RWPE1 (cell line): ENCODE measurements at regions of chr15 and their contacts with region 1.

Region 1: DNA sequence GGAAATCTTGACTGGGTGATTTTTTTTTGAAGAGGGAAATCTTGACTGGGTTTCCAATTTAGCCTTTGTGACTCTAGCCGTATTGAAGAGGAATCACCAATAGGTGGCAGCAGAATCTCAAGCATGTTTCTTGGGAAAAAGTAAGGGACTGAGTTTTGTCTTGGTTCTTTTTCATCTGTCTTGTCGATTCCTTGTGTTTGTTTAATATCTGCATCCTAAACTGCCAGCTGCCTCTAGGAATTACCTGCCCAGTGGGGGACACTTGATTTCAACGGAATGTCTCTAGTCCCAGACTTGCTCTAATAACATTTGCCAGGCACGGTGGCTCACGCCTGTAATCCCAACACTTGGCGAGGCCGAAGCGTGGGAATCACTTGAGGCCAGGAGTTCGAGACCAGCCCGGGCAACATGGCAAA is 89.2 kb downstream of the RBPMS2 start:
- DNase-seq: peak; percentile 46
- H3K27ac ChIP-seq: no peak overlapping the region
- CTCF ChIP-seq: peak; percentile 92

Region 2: DNA sequence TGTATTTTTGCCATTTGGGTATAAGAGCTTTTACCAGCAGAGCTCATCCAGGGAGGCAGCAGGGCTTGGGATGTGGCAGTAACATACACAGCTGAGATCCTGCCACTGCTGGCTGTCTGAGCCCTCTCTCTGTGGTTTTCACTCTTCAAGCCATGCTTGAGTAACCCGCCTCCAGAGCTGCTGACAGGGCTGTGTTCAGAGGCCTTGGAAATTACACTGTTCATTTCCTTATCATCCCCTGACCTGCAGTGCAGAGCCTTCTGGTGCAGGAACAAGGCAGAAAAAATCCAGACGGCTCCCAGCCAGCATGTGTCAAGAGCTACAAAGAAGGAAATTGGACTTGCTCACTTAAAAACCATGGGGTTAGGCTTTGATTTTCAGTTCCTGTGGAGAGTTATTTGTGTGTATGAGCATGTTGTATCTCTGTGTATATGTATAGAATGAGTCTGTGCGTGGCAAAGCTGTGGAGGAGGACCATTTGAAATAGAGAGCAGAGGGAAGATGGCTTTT is 178.9 kb before region 1 on chr15:
- CTCF ChIA-PET with region 1: no interaction called
- POLR2A ChIA-PET with region 1: interaction called, 10 read pairs
- DNase-seq: no peak
- H3K27ac ChIP-seq: no peak overlapping the region
- CTCF ChIP-seq: no peak

Region 3: DNA sequence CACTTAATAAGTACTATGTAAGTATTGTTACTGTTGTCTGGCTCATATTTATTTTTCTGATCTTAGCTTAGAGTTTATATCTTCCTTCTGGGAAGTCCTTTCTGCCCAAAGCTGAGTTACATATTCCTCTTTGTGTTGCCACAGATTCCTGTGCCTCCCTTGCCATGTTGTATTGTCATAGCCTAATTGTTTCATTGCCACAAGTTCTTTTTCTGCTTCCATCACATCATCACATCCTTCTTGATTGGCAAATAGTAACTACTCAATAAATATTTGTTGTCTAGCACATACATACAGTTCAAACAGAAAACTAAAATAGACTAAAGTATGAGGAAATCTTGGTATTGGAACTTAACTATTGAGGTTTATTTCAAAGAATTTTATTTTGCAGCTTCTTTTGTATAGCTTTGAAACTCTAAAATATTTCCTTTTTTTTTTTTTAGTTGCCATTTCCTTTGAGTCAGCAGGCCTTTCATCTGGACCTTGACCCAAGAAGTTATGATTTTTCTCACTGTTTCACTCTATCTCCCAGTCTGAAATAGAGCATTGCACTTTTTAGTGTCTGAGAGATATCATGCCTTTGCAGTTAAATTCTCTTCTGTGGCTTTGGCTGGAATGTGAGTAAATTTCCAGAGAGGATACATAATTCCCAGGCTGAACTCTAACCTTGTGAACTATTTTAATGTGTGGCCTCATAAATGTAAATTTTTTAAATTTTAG is 127.6 kb before region 1 on chr15:
- CTCF ChIA-PET with region 1: no interaction called
- POLR2A ChIA-PET with region 1: no interaction called
- DNase-seq: no peak
- H3K27ac ChIP-seq: no peak overlapping the region
- CTCF ChIP-seq: no peak